IMR-90 (cell line): ENCODE measurements at regions of chr5 and their contacts with region 1.

Region 1: DNA sequence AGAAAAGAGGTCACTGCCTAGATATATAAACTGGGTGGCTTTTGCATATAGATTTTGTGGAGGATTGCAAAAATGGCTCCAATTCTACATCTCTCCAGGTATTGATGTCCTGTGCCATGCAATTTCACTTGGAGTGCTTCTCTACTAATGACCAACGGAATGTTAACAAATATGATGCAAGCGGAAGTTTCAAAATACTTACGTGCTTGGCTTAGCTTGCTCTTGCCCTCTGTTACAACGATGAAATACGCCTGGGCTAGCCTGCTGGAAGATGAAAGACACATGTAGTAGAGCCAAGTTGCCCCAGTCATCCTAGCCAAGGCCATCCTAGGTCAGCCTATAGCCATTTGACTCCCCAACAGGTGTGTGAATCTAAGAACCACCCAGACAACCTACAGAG is 3.6 kb upstream of the POC5 start:
- DNase-seq: no peak
- ATAC-seq: no peak
- H3K4me3 ChIP-seq: no peak overlapping the region
- H3K27ac ChIP-seq: no peak overlapping the region
- H3K4me1 ChIP-seq: no peaks in the 10 kb centered on the region
- H3K27me3 ChIP-seq: no peaks in the 10 kb centered on the region
- CTCF ChIP-seq: no peak
- POLR2A ChIP-seq: no peak
- RAD21 ChIP-seq: no peak

Region 2: GRCh38 chr5:75734913-75735789 is 14.3 kb after region 1 on chr5:
- CTCF ChIA-PET with region 1: no interaction called
- POLR2A ChIA-PET with region 1: no interaction called
- dilution Hi-C with region 1: no loop called
- in situ Hi-C with region 1: no loop called
- intact Hi-C with region 1: no loop called
- DNase-seq: peak; percentile 4
- ATAC-seq: no peak
- H3K4me3 ChIP-seq: no peak overlapping the region
- H3K27ac ChIP-seq: no peak overlapping the region
- H3K4me1 ChIP-seq: no peaks in the 10 kb centered on the region
- H3K27me3 ChIP-seq: no peaks in the 10 kb centered on the region; the same call in 1 of the 2 replicates
- CTCF ChIP-seq: peak; percentile 18; the same call in 1 of the 2 replicates
- POLR2A ChIP-seq: no peak
- RAD21 ChIP-seq: peak; percentile 29; the same call in 1 of the 2 replicates

Region 3: GRCh38 chr5:75921011-75921410 is 200.1 kb after region 1 on chr5:
- CTCF ChIA-PET with region 1: no interaction called
- POLR2A ChIA-PET with region 1: no interaction called
- dilution Hi-C with region 1: no loop called
- in situ Hi-C with region 1: no loop called
- intact Hi-C with region 1: no loop called
- DNase-seq: no peak
- ATAC-seq: no peak
- H3K4me3 ChIP-seq: no peak overlapping the region
- H3K27ac ChIP-seq: no peak overlapping the region
- H3K4me1 ChIP-seq: no peaks in the 10 kb centered on the region
- H3K27me3 ChIP-seq: no peaks in the 10 kb centered on the region
- CTCF ChIP-seq: no peak
- POLR2A ChIP-seq: no peak
- RAD21 ChIP-seq: no peak

Region 4: DNA sequence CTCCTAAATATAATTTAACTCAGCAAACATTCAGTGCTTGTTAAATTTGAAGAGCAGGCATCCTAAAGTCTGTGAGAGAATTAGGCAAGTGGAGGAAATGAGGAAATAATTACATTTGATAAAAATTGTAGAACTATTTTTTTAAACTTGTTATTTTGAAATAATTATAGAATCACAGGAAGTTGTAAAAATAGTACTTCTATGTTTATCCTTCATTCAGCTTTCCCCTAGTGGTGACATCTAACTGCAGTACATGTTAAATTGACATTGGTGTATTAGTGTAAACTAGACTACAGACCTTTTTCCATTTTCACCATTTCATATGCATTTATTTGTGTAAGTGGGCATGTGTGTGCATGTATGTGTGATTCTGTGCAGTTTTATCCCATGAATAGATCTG is 850.7 kb after region 1 on chr5:
- CTCF ChIA-PET with region 1: no interaction called
- POLR2A ChIA-PET with region 1: no interaction called
- dilution Hi-C with region 1: no loop called
- in situ Hi-C with region 1: no loop called
- intact Hi-C with region 1: loop called (anchors 2 kb)
- DNase-seq: no peak
- ATAC-seq: no peak
- H3K4me3 ChIP-seq: no peak overlapping the region
- H3K27ac ChIP-seq: no peak overlapping the region
- H3K4me1 ChIP-seq: no peaks in the 10 kb centered on the region
- H3K27me3 ChIP-seq: peaks cover 8% of the 10 kb centered on the region
- CTCF ChIP-seq: no peak
- POLR2A ChIP-seq: no peak
- RAD21 ChIP-seq: no peak